ENCODE measurements at regions of chr11 and their contacts with region 1.

Region 1: DNA sequence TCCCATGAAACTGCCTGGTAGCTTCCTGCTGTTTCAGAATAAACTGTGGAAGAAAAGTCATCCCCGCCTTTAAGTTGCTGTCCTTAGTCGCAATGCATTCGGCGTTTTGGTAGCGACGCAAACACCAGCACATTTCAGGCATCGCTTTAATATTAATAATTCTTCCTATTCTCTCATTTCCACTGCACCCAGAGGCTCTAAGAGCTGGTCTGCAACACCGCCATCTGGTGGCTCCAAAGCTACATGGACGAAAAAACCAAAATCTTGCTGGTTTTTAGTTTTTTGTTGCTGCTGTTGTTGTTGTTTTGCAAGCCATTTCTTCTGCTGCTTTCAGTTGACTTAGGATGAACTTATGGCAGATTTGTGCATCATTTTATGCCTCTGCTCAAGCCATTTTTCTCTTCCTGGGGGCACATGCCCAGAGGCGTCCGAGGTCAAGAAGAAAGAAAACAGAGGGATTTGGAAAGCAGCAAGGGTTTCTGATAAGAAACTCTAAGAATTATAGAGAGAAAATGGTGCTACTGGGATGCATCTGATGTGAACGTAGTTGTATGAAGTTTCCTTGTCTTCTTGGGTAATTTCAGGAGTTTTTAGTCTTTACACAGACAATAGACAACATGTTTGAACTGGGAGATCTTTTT is 345.4 kb upstream of the KIRREL3 start:
- DNase-seq: peak in 7 of 14 experiments; percentile 0 to 34 (median 3)
- ATAC-seq: no peak
- H3K4me3 ChIP-seq: no peak overlapping the region
- H3K4me3 Mint-ChIP-seq: no peak overlapping the region
- H3K27ac ChIP-seq: no peak overlapping the region
- H3K27ac Mint-ChIP-seq: no peak overlapping the region
- H3K4me1 ChIP-seq: no peaks in the 10 kb centered on the region
- H3K4me1 Mint-ChIP-seq: no peaks in the 10 kb centered on the region
- H3K27me3 ChIP-seq: no peaks in the 10 kb centered on the region
- H3K27me3 Mint-ChIP-seq: no peaks in the 10 kb centered on the region
- CTCF ChIP-seq: peak; percentile 38

Region 2: DNA sequence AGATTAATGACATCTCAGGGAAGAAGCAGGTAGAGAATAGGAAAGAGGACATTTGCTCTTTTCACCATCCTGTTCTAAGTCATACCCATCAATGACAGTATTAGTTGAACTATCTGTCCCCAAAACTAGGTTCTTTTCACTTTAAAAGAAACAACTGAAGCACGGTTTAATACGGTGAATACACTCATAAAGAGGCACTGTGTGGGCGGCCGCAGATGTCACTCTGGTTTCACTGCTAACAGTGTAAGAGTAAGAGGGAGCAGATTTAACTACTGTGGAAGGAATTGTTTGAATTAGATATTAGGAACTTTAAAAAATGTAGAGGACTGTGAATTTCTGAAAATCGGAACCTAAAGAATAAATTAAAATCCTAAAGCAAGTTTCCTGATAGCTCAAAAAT is 1350.6 kb before region 1 on chr11:
- CTCF ChIA-PET with region 1: no interaction called
- POLR2A ChIA-PET with region 1: no interaction called
- intact Hi-C with region 1: no loop called
- DNase-seq: no peak
- ATAC-seq: no peak
- H3K4me3 ChIP-seq: no peak overlapping the region
- H3K4me3 Mint-ChIP-seq: no peak overlapping the region
- H3K27ac ChIP-seq: no peak overlapping the region
- H3K27ac Mint-ChIP-seq: no peak overlapping the region
- H3K4me1 ChIP-seq: no peaks in the 10 kb centered on the region
- H3K4me1 Mint-ChIP-seq: no peaks in the 10 kb centered on the region
- H3K27me3 ChIP-seq: no peaks in the 10 kb centered on the region
- H3K27me3 Mint-ChIP-seq: no peaks in the 10 kb centered on the region
- CTCF ChIP-seq: no peak

Region 3: DNA sequence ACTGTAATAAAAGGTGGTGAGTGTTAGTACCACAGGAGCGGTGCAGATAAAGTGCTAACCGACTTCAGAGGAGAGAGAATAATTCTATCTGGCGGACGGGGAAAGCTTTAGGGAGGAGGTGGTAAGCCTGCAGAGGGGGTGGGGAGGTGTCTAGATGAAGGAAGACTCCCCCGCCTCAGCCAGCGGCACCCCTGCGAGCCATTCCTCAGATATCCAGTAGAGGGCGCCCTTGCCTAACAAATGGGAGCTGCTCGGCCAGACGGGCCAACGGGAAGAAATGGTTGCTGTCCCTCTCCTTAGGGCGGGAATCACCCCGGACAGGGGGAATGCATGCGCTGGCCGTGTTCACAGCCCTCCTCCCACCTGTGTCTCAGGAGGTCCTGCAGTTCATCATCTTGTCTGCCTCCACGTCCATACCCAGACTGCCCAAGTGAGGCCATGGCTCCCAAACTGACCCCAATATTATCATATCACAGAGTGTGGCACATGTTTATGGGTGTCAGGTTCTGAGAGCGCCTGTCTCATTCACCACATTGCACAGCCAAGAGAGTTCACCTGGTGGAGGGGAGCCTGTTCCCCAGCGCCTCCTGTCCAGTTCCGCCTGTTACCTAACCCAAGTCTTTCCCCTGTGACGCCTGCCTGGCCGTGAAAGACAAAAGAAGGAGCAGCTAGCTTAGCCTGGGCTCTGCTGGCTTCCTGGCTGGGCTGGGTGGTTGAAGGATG is 905.0 kb before region 1 on chr11:
- CTCF ChIA-PET with region 1: interaction called, 4 read pairs
- POLR2A ChIA-PET with region 1: no interaction called
- intact Hi-C with region 1: loop called in 1 of 2 experiments (anchors 2 kb)
- DNase-seq: peak; percentile 47 to 83 (median 64)
- ATAC-seq: peak; percentile 66
- H3K4me3 ChIP-seq: no peak overlapping the region
- H3K4me3 Mint-ChIP-seq: no peak overlapping the region
- H3K27ac ChIP-seq: no peak overlapping the region
- H3K27ac Mint-ChIP-seq: no peak overlapping the region
- H3K4me1 ChIP-seq: peaks cover 6% of the 10 kb centered on the region
- H3K4me1 Mint-ChIP-seq: peaks cover 6% of the 10 kb centered on the region
- H3K27me3 ChIP-seq: peaks cover 0 to 7% of the 10 kb centered on the region in 2 experiments
- H3K27me3 Mint-ChIP-seq: peaks cover 6% of the 10 kb centered on the region
- CTCF ChIP-seq: peak; percentile 98